ENCODE measurements at regions of chr6 and their contacts with region 1.

Region 1: GRCh38 chr6:37922563-37922962 is 103.0 kb downstream of the ZFAND3 start:
- DNase-seq: no peak
- ATAC-seq: no peak
- H3K4me3 ChIP-seq: no peak overlapping the region
- H3K27ac ChIP-seq: no peak overlapping the region
- H3K4me1 ChIP-seq: 0 out of 2 replicates have a peak, but pooled peaks cover 9% of the 10 kb centered on the region
- H3K27me3 ChIP-seq: no peaks in the 10 kb centered on the region
- CTCF ChIP-seq: no peak
- EP300 ChIP-seq: no peak
- POLR2A ChIP-seq: no peak
- RAD21 ChIP-seq: no peak

Region 2: DNA sequence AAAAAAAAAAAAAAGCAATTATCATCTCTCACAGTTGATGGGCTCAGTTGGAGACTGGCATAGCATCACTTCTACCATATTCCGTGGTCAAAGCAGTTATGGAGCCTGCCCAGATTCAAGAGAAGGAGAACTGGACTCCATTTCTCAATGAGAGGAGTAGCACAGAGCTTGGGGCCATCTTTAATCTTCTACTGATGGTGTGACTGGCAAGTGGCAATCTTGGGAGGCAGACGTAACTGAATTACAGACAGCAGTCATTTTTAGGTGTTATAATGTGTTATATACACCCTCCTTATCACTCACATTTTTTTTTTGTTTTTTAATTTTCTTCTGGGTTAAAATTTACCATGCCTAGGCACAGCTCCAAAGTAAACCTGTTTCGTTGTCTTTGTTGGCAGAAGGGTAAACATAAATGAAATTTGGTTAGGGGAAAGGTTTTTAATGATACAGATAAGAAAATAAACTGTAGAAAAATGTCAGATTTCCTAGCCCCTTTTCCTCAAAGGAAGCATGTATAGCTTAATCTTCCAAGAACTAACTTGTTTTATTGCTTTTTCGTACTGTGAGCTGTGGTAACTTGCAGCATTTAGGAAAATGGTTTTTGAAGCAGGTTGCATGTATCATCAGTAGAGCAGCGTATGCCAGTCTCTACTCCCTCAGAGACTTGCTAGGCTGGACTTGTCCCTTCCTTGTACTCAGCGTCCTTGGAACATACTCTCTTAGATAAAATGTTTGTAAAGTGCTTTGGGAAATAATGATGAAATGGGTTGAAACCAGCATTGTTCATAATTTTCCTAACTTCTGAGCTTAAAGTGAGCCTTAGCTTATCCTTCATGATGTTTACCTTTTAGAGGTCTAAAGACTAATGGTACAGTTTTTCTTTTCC is 77.3 kb before region 1 on chr6:
- CTCF ChIA-PET with region 1: no interaction called
- POLR2A ChIA-PET with region 1: interaction called, 11 read pairs
- RAD21 ChIA-PET with region 1: no interaction called
- SMC1A ChIA-PET with region 1: no interaction called
- in situ Hi-C with region 1: no loop called
- intact Hi-C with region 1: no loop called
- DNase-seq: no peak
- ATAC-seq: no peak
- H3K4me3 ChIP-seq: no peak overlapping the region
- H3K27ac ChIP-seq: no peak overlapping the region
- H3K4me1 ChIP-seq: peaks cover 4% of the 10 kb centered on the region
- H3K27me3 ChIP-seq: no peaks in the 10 kb centered on the region
- CTCF ChIP-seq: no peak
- EP300 ChIP-seq: no peak
- POLR2A ChIP-seq: no peak
- RAD21 ChIP-seq: no peak

Region 3: DNA sequence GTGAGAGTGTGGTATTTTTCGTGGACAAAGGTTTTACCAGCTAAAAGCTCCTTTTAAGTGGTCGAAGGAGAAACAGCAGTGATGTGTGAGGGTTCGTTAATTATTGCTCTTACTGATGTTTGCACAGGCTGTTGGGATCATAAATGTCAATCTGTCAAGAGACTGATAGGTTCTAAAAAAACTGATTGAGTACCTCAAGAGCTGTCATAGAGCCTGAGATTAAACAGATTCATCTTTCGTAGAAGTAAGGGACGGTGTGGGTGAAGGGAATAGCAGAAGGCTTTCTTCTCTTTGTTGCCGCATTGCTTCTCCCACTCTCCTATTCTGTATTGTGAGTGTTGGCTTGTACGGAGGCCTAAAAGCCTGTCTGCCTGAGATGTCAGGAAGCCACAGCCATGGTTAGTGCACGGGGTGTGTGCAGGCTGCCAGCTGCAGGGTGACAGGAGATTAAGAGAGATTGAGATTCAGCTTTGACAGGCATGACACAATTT is 188.0 kb after region 1 on chr6:
- CTCF ChIA-PET with region 1: no interaction called
- POLR2A ChIA-PET with region 1: no interaction called
- RAD21 ChIA-PET with region 1: no interaction called
- SMC1A ChIA-PET with region 1: no interaction called
- in situ Hi-C with region 1: no loop called
- intact Hi-C with region 1: no loop called
- DNase-seq: no peak
- ATAC-seq: no peak
- H3K4me3 ChIP-seq: no peak overlapping the region
- H3K27ac ChIP-seq: no peak overlapping the region
- H3K4me1 ChIP-seq: no peaks in the 10 kb centered on the region
- H3K27me3 ChIP-seq: no peaks in the 10 kb centered on the region
- CTCF ChIP-seq: no peak
- EP300 ChIP-seq: no peak
- POLR2A ChIP-seq: no peak
- RAD21 ChIP-seq: no peak